A549 (cell line): ENCODE measurements at regions of chr11 and their contacts with region 1.

Region 1: DNA sequence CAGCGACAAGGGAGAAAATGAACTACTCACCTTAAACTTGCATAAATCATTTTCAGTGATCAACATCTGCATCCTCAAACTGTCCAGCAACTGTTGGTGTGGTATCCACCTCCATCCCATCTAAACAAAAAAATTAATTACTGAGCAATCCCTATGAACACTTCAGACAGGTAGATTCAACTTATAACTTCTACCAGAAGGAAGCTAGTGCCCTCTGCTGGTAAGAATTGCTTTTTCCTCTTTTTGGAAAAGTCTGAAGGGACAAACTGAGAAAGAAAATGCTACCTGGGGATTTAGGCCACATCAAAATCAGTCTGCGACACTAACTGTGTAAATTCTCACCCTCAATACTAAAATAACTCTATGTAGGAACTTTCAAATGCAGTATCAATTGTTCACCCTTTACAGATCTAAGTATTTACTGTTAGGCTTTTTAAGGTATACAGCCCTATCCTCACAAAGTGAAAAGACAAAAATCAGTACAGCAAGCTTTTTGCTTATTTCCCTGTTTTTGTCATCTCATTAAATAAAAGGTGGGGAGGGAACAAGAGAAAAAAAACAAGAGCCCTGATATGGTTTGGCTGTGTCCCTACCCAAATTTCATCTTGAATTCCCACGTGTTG is 17.9 kb downstream of the CLNS1A start:
- DNase-seq: peak; percentile 12 to 61
- ATAC-seq: peak in 1 of 2 experiments; percentile 76; a peak in 4 of 6 replicates
- H3K4me3 ChIP-seq: no peak overlapping the region
- H3K27ac ChIP-seq: no peak overlapping the region
- H3K4me1 ChIP-seq: no peaks in the 10 kb centered on the region
- CTCF ChIP-seq: peak; percentile 84
- EP300 ChIP-seq: no peak
- POLR2A ChIP-seq: no peak
- RAD21 ChIP-seq: peak; percentile 78 to 80

Region 2: GRCh38 chr11:77198440-77198849 is 421.2 kb before region 1 on chr11:
- CTCF ChIA-PET with region 1: interaction called, 25 read pairs
- POLR2A ChIA-PET with region 1: no interaction called
- DNase-seq: peak; percentile 36 to 53
- ATAC-seq: peak in 1 of 2 experiments; percentile 80; a peak in 3 of 6 replicates
- H3K4me3 ChIP-seq: no peak overlapping the region
- H3K27ac ChIP-seq: no peak overlapping the region
- H3K4me1 ChIP-seq: no peaks in the 10 kb centered on the region
- CTCF ChIP-seq: 0 out of 3 replicates have a peak, but pooled peaks have one; percentile 9
- EP300 ChIP-seq: no peak
- POLR2A ChIP-seq: no peak
- RAD21 ChIP-seq: no peak

Region 3: DNA sequence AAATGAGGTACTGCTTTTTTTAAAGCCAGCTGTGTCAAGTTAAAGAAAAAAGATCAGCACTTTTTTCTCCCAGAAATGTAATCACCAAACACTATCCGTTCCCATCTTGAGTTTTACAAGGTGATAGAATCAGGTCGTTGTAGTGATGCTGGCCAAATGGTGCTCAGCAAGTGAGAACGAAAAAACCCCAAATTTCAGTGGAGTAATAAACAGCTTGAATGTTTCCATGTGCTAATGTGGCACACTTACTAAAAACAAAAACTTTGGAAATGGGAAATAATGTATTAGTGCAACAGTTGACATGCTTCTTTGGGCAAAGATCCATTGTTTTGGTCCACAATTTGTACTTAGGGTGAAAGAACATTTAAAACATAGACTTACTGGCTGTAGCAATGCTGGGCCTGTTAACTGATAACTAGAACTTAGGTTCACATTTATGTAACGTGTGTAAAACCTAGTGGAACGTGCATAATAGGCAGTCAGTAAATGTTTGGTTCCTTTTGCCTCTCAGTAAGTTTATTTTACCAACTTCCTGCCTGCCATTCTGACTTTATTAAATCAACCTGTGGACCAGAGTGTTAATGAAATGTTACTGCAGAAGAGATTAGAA is 302.8 kb before region 1 on chr11:
- CTCF ChIA-PET with region 1: no interaction called
- POLR2A ChIA-PET with region 1: no interaction called
- DNase-seq: no peak
- ATAC-seq: no peak
- H3K4me3 ChIP-seq: no peak overlapping the region
- H3K27ac ChIP-seq: no peak overlapping the region
- H3K4me1 ChIP-seq: no peaks in the 10 kb centered on the region
- CTCF ChIP-seq: no peak
- EP300 ChIP-seq: no peak
- POLR2A ChIP-seq: no peak
- RAD21 ChIP-seq: no peak

Region 4: DNA sequence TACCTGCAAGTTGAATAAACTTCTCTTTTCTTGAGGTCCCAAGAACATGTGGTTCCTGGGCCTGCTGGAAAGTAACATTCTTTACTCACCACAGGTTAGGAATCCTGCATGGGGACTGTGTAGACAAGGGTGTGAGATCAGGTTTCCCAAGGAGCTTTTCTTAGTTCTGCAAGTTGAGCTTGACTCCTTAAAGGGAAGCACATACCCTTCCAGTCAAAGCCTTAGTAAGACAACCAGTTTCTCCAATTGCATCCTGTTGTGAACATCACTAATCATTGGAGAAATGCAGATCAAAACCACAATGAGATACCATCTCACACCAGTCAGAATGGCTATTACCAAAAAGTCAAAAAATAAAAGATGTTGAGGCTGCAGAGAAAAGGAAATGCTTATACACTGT is 97.5 kb before region 1 on chr11:
- CTCF ChIA-PET with region 1: no interaction called
- POLR2A ChIA-PET with region 1: no interaction called
- DNase-seq: no peak
- ATAC-seq: no peak
- H3K4me3 ChIP-seq: no peak overlapping the region
- H3K27ac ChIP-seq: no peak overlapping the region
- H3K4me1 ChIP-seq: no peaks in the 10 kb centered on the region
- CTCF ChIP-seq: no peak
- EP300 ChIP-seq: no peak
- POLR2A ChIP-seq: no peak
- RAD21 ChIP-seq: no peak

Region 5: GRCh38 chr11:77547863-77548551 is 71.7 kb before region 1 on chr11:
- CTCF ChIA-PET with region 1: interaction called, 18 read pairs
- POLR2A ChIA-PET with region 1: no interaction called
- DNase-seq: peak; percentile 57 to 74
- ATAC-seq: peak; percentile 86 to 89
- H3K4me3 ChIP-seq: no peak overlapping the region
- H3K27ac ChIP-seq: no peak overlapping the region
- H3K4me1 ChIP-seq: no peaks in the 10 kb centered on the region
- CTCF ChIP-seq: peak; percentile 88
- EP300 ChIP-seq: no peak
- POLR2A ChIP-seq: no peak
- RAD21 ChIP-seq: peak; percentile 88 to 89

Region 6: DNA sequence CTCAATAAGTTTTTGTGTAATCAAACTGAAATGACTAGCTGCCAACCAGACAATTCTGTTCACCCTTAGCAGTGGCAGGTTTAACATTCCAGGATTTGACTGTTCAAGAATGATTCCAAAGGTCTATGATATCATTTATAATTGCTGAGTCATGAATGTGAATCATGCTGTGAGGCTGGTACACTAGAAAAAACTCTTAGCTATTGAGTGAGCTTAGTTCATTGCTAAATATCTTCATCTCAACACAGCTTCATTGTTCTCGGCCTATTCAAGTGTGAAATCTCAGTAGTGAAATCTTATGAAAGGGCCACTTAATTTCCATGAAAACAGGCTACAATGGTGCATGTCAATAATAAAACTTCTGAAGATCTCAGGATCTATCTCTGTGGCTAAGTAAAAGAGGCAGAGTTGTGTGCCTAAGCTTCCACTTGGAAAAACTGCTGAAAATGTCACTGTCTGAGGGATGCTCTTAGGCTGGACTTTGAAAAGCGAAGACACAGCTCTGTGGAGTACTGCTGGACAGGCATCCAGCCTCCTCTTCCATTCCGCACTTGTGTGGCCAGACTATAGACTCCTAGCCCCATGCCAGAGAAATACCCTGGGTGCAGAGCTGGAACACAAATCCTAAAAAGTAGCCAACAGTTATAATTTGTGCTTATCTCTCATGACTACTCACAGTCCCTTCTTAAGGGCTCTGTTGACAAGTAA is 17.2 kb before region 1 on chr11:
- CTCF ChIA-PET with region 1: interaction called, 18 read pairs
- POLR2A ChIA-PET with region 1: interaction called, 3 read pairs
- DNase-seq: peak; percentile 42 to 72
- ATAC-seq: peak; percentile 90 to 92
- H3K4me3 ChIP-seq: peak overlapping the region; percentile 8; the same call in 1 of the 3 replicates
- H3K27ac ChIP-seq: peak overlapping the region; percentile 89 to 91
- H3K4me1 ChIP-seq: peaks cover 36% of the 10 kb centered on the region
- CTCF ChIP-seq: no peak
- EP300 ChIP-seq: no peak
- POLR2A ChIP-seq: no peak
- RAD21 ChIP-seq: no peak

Region 7: GRCh38 chr11:77630157-77630710 is 10.5 kb after region 1 on chr11:
- CTCF ChIA-PET with region 1: interaction called, 21 read pairs
- POLR2A ChIA-PET with region 1: no interaction called
- DNase-seq: no peak
- ATAC-seq: no peak
- H3K4me3 ChIP-seq: no peak overlapping the region
- H3K27ac ChIP-seq: no peak overlapping the region
- H3K4me1 ChIP-seq: no peaks in the 10 kb centered on the region
- CTCF ChIP-seq: no peak
- EP300 ChIP-seq: no peak
- POLR2A ChIP-seq: no peak
- RAD21 ChIP-seq: no peak

Region 8: DNA sequence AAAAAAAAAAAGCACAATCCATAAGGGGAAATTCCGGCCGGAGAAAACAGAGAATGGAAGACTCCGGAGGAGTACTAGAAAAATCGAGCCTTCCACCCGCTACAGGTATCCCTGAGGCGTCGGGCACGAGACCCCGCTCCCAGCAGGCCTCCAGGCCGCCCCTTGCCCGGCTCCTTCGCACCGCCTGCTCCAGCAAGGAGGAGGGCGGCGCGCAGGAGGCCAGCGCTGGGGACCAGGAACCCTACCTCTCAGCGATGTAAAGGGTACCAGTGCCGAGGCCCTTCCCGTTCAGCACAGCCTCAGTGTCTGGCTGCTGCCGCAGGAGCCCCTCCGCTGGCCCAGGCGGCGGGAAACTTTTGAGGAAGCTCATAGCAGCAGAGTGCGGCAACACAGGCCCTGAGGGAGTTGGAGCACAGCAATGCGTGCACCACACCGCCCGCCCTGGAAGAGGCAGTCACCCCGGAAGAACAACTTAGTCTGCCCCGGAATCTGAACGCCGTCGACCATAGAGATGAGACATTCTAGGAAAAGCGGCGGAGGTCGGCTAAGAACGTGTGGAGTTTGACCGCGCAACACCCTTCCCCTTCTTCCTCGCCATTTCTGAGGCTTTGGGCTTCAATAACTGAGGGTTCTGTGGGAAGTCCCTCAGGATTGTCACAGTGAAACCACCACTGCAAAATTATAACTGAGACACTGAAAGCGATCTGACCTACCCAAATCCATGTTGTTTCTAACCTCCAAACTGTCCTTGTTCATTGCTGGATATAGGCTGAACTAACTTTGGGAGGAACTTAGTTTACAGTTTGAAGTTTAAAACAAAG is 17.9 kb after region 1 on chr11 and contains the start of gene CLNS1A:
- CTCF ChIA-PET with region 1: interaction called, 12 read pairs
- POLR2A ChIA-PET with region 1: no interaction called
- DNase-seq: peak; percentile 67 to 93
- ATAC-seq: peak; percentile 100
- H3K4me3 ChIP-seq: peak within 1 kb of the TSS; percentile 73
- H3K27ac ChIP-seq: peak within 1 kb of the TSS; percentile 74 to 93
- H3K4me1 ChIP-seq: peaks cover 9% of the 10 kb centered on the region; the same call in 1 of the 3 replicates
- CTCF ChIP-seq: no peak
- EP300 ChIP-seq: no peak
- POLR2A ChIP-seq: peak; percentile 92
- RAD21 ChIP-seq: no peak
- polyA plus RNA-seq, gene CLNS1A: 176 and 210 TPM in 2 replicates

Region 9: GRCh38 chr11:77677138-77677537 is 57.5 kb after region 1 on chr11:
- CTCF ChIA-PET with region 1: no interaction called
- POLR2A ChIA-PET with region 1: no interaction called
- DNase-seq: no peak
- ATAC-seq: no peak
- H3K4me3 ChIP-seq: no peak overlapping the region
- H3K27ac ChIP-seq: no peak overlapping the region
- H3K4me1 ChIP-seq: peaks cover 6% of the 10 kb centered on the region; the same call in 1 of the 3 replicates
- CTCF ChIP-seq: no peak
- EP300 ChIP-seq: no peak
- POLR2A ChIP-seq: no peak
- RAD21 ChIP-seq: no peak

Region 10: GRCh38 chr11:77752518-77752917 is 132.8 kb after region 1 on chr11:
- CTCF ChIA-PET with region 1: no interaction called
- POLR2A ChIA-PET with region 1: no interaction called
- DNase-seq: no peak
- ATAC-seq: no peak
- H3K4me3 ChIP-seq: no peak overlapping the region
- H3K27ac ChIP-seq: no peak overlapping the region
- H3K4me1 ChIP-seq: peaks cover 8% of the 10 kb centered on the region
- CTCF ChIP-seq: no peak
- EP300 ChIP-seq: no peak
- POLR2A ChIP-seq: no peak
- RAD21 ChIP-seq: no peak